Activated naive CD4-positive, alpha-beta T cell treated with anti-CD3 and anti-CD28 coated beads for 36 hours (primary cell): ENCODE measurements at regions of chr6 and their contacts with region 1.

Region 1: GRCh38 chr6:7615611-7616383 is 25.8 kb downstream of the SNRNP48 start:
- DNase-seq: peak; percentile 58
- H3K4me3 Mint-ChIP-seq: no peak overlapping the region
- H3K27ac Mint-ChIP-seq: no peak overlapping the region
- H3K4me1 Mint-ChIP-seq: peaks cover 14% of the 10 kb centered on the region
- H3K27me3 Mint-ChIP-seq: no peaks in the 10 kb centered on the region

Region 2: GRCh38 chr6:7276199-7276524 is 339.6 kb before region 1 on chr6:
- CTCF ChIA-PET with region 1: interaction called, 23 read pairs
- intact Hi-C with region 1: loop called (anchors 1 kb)
- DNase-seq: no peak
- H3K4me3 Mint-ChIP-seq: no peak overlapping the region
- H3K27ac Mint-ChIP-seq: no peak overlapping the region
- H3K4me1 Mint-ChIP-seq: peaks cover 4% of the 10 kb centered on the region
- H3K27me3 Mint-ChIP-seq: no peaks in the 10 kb centered on the region

Region 3: GRCh38 chr6:7424967-7425807 is 190.6 kb before region 1 on chr6:
- CTCF ChIA-PET with region 1: interaction called, 6 read pairs
- intact Hi-C with region 1: loop called (anchors 1 kb)
- DNase-seq: no peak
- H3K4me3 Mint-ChIP-seq: no peak overlapping the region
- H3K27ac Mint-ChIP-seq: no peak overlapping the region
- H3K4me1 Mint-ChIP-seq: no peaks in the 10 kb centered on the region
- H3K27me3 Mint-ChIP-seq: no peaks in the 10 kb centered on the region

Region 4: DNA sequence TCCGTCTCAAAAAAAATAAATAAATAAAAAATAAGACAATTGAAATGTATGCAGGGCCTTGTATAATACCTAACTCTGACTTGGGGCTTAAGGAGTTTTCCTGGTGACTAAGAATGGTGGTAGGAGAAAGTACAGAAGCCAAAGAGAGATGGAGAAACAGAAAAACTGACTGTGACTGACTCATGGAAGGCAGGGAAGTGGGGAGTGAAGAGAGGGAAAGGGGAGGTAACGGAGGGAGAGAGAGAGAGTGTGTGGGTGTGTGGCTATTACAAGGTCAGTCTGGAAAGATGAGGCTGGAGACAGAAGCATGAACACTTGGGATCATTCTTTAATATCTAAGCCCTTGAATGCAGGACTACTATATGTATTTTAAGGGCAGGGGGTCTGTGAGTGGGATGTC is 12.7 kb after region 1 on chr6:
- CTCF ChIA-PET with region 1: no interaction called
- intact Hi-C with region 1: no loop called
- DNase-seq: no peak
- H3K4me3 Mint-ChIP-seq: no peak overlapping the region
- H3K27ac Mint-ChIP-seq: no peak overlapping the region
- H3K4me1 Mint-ChIP-seq: no peaks in the 10 kb centered on the region
- H3K27me3 Mint-ChIP-seq: peaks cover 4% of the 10 kb centered on the region

Region 5: GRCh38 chr6:8006208-8006607 is 390.4 kb after region 1 on chr6:
- CTCF ChIA-PET with region 1: no interaction called
- intact Hi-C with region 1: loop called (anchors 2 kb)
- DNase-seq: peak; percentile 25
- H3K4me3 Mint-ChIP-seq: no peak overlapping the region
- H3K27ac Mint-ChIP-seq: no peak overlapping the region
- H3K4me1 Mint-ChIP-seq: peaks cover 4% of the 10 kb centered on the region
- H3K27me3 Mint-ChIP-seq: no peaks in the 10 kb centered on the region